ENCODE measurements at regions of chr2 and their contacts with region 1.

Region 1: GRCh38 chr2:55408918-55409868 is 10.5 kb downstream of the CCDC88A start:
- DNase-seq: no peak
- ATAC-seq: no peak
- H3K4me3 Mint-ChIP-seq: no peak overlapping the region
- H3K27ac Mint-ChIP-seq: no peak overlapping the region
- H3K4me1 Mint-ChIP-seq: peaks cover 8% of the 10 kb centered on the region
- H3K27me3 Mint-ChIP-seq: no peaks in the 10 kb centered on the region

Region 2: GRCh38 chr2:55395724-55396605 is 13.2 kb before region 1 on chr2:
- CTCF ChIA-PET with region 1: interaction called, 4 read pairs
- POLR2A ChIA-PET with region 1: interaction called, 12 read pairs
- intact Hi-C with region 1: no loop called
- DNase-seq: no peak
- ATAC-seq: no peak
- H3K4me3 Mint-ChIP-seq: no peak overlapping the region
- H3K27ac Mint-ChIP-seq: no peak overlapping the region
- H3K4me1 Mint-ChIP-seq: no peaks in the 10 kb centered on the region
- H3K27me3 Mint-ChIP-seq: no peaks in the 10 kb centered on the region

Region 3: DNA sequence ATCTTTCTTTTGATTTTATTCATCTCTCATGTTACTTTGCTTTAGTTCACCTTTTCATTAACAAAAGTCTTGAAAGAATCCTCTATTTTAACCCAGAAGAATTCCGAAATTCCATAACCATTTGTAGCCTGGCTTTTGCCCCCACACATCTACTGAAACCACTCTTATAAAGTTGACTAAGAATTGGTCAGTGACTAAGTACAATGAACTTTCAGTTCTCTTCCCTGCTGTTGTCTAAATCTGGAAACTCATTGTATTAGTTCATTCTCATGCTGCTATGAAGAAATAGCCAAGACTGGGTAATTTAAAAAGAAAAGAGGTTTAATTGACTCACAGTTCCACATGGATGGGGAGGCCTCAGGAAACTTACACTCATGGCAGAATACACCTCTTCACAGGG is 334.4 kb after region 1 on chr2:
- CTCF ChIA-PET with region 1: no interaction called
- POLR2A ChIA-PET with region 1: no interaction called
- intact Hi-C with region 1: no loop called
- DNase-seq: no peak
- ATAC-seq: no peak
- H3K4me3 Mint-ChIP-seq: no peak overlapping the region
- H3K27ac Mint-ChIP-seq: no peak overlapping the region
- H3K4me1 Mint-ChIP-seq: no peaks in the 10 kb centered on the region
- H3K27me3 Mint-ChIP-seq: peaks cover 23% of the 10 kb centered on the region